Caco-2 (cell line): ENCODE measurements at regions of chr13 and their contacts with region 1.

Region 1: DNA sequence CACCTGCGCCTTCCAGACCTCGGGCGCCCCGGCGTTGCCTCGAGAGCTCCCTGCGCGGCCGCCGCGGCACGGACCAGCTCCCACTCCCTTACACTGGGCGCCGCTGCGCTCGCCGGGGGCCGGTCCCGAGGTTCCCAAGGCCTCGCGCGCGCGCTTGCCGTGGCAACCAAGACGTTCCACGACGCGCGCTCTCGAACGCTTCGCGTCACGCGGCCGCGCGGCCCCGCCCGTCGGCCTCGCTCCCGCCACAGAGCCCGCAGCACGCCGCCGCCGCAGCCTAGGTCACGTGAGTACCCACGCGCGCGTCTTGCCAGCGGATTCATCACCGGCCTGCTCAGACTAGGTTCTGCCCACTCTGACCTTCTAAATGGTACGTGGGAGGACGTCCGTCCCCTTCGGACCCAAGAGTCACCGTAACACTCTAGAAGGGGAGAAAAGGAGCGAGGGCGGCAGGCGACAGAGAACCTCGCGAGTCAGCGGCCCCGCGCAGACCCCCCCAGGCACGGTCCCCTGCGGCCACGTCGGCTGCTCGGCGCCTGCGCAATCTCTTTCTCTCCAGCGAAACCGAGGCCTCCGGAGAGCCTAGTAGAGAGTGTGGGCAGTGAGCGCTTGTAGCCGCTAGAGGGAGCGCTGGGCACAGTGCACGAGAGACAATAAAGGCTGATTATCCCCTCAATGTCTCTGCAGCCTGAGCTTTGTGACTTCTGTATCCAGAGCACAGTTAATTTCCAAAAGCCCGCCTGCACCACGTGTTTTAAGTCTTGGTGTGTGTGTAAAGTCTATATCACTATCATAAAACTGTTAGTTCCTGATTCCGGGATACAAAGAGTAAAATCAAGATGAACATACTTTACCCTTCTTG is at the start of gene SPART:
- DNase-seq: peak in 1 of 2 experiments; percentile 17
- H3K4me3 ChIP-seq: no peak within 1 kb of the TSS
- H3K4me3 Mint-ChIP-seq: no peak within 1 kb of the TSS
- H3K27ac Mint-ChIP-seq: no peak within 1 kb of the TSS
- H3K4me1 ChIP-seq: no peaks in the 10 kb centered on the region
- H3K4me1 Mint-ChIP-seq: no peaks in the 10 kb centered on the region
- H3K27me3 ChIP-seq: no peaks in the 10 kb centered on the region
- H3K27me3 Mint-ChIP-seq: no peaks in the 10 kb centered on the region
- CTCF ChIP-seq: peak in 1 of 2 experiments; percentile 40
- total RNA-seq, gene SPART: not detected in 2 replicates

Region 2: GRCh38 chr13:36395280-36395679 is 48.8 kb after region 1 on chr13:
- CTCF ChIA-PET with region 1: no interaction called
- POLR2A ChIA-PET with region 1: no interaction called
- intact Hi-C with region 1: loop called (anchors 1 kb)
- DNase-seq: no peak
- H3K4me3 ChIP-seq: no peak overlapping the region
- H3K4me3 Mint-ChIP-seq: no peak overlapping the region
- H3K27ac Mint-ChIP-seq: no peak overlapping the region
- H3K4me1 ChIP-seq: no peaks in the 10 kb centered on the region
- H3K4me1 Mint-ChIP-seq: no peaks in the 10 kb centered on the region
- H3K27me3 ChIP-seq: no peaks in the 10 kb centered on the region
- H3K27me3 Mint-ChIP-seq: no peaks in the 10 kb centered on the region
- CTCF ChIP-seq: no peak